Pancreas (tissue), 10 donors: ENCODE measurements at regions of chr5 and their contacts with region 1.

Region 1: DNA sequence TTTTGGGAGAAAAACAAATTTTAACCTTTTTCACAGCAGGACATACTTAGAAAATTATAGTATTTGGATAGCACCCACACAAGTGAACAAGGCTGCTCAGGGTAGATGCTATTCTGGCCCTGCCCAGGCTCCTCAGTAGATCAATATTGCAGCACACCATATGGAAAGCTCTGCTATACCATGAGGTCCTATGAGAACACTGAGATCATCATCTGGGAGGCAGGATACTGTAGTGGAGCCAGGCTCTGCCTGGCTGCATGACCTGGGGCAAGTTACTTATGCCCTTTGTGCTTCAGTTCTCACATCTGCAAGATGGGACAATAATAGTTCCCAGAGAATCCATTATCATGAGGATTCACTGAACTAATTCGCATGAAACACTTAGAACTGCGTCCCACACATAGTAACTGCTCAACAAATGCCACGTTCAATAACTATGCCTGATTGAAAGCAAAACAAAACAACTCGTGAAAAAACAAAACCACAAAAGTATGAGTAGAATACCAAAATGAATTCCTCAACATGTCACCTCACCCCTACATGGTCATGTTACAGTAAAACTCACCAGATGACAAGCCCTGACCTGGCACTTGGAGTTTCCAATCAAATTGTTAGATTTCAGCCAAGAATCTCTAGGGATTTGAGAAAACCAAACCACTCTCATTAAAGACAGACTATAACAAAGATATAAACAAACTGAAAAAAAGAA is 31.9 kb downstream of the ARSB start:
- DNase-seq: no peak
- ATAC-seq: no peak
- H3K4me3 ChIP-seq: no peak overlapping the region
- H3K27ac ChIP-seq: no peak overlapping the region
- H3K4me1 ChIP-seq: no peaks in the 10 kb centered on the region
- H3K27me3 ChIP-seq: no peaks in the 10 kb centered on the region
- CTCF ChIP-seq: no peak

Region 2: DNA sequence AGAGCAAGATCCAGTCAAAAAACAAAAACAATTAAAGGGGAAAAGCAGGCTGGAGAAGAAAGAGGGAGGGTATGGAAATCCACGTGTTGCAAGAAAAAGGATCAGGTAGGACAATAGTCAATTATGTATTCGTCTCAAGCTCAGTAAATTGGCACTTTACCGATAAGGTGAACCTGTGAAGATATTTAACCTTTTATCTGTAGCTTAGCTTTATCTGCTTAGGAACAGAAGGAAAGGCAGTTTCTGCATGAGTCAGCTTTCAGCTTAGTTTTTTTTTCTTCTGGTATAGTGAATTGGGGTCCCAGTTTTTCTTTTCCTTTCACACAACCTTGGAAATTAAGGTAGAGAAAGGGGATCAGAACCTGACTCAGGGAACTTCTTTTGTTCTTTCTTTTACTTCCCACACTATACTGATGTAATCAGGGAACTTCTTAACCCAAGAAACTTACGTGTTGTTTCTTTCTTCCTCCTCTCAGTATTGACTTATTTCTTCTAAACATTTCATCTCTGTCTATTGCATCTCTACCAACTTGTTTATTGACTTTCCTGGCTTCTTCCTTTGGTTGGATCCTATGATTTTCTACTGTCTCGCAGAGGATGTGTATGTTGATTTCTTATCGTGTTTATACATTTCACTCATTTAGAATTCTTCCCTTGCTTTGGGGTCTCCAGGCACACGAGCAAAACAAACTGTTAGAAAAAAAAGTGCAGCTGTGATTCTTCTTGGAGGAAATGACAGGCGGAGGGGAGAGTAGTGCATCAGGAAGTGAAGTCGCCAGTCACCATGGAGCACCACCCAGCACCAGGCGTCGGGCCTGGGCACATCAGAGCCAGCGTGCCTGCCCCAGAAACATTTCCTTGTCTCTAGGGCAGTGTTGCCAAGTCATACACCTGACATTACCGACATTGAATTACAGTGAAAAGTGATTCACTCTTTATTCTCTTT is 181.7 kb before region 1 on chr5:
- intact Hi-C with region 1: no loop called
- DNase-seq: no peak
- ATAC-seq: peak in 3 of 4 donors; percentile 40 to 77 (median 56)
- H3K4me3 ChIP-seq: no peak overlapping the region
- H3K27ac ChIP-seq: no peak overlapping the region
- H3K4me1 ChIP-seq: no peaks in the 10 kb centered on the region
- H3K27me3 ChIP-seq: no peaks in the 10 kb centered on the region
- CTCF ChIP-seq: no peak

Region 3: GRCh38 chr5:78899922-78900362 is 53.3 kb before region 1 on chr5:
- intact Hi-C with region 1: loop called in 1 of 3 experiments (anchors 10 kb)
- DNase-seq: peak in 4 of 6 donors; percentile 42 to 65 (median 50)
- ATAC-seq: peak; percentile 69 to 91 (median 86)
- H3K4me3 ChIP-seq: no peak overlapping the region
- H3K27ac ChIP-seq: no peak overlapping the region
- H3K4me1 ChIP-seq: peaks cover 0 to under 1% (median 0%) of the 10 kb centered on the region in 3 donors
- H3K27me3 ChIP-seq: no peaks in the 10 kb centered on the region
- CTCF ChIP-seq: peak; percentile 50 to 65 (median 58)

Region 4: GRCh38 chr5:79111960-79112702 is 158.9 kb after region 1 on chr5:
- intact Hi-C with region 1: no loop called
- DNase-seq: peak in 2 of 6 donors; percentile 43 to 58
- ATAC-seq: peak in 1 of 4 donors; percentile 50
- H3K4me3 ChIP-seq: no peak overlapping the region
- H3K27ac ChIP-seq: no peak overlapping the region
- H3K4me1 ChIP-seq: peaks cover 0 to 3% (median 0%) of the 10 kb centered on the region in 3 donors
- H3K27me3 ChIP-seq: no peaks in the 10 kb centered on the region
- CTCF ChIP-seq: no peak